Panc1 (cell line): ENCODE measurements at regions of chr13 and their contacts with region 1.

Region 1: GRCh38 chr13:79548902-79549301 is 67.9 kb downstream of the NDFIP2 start:
- DNase-seq: no peak
- ATAC-seq: no peak
- H3K4me3 ChIP-seq: no peak overlapping the region
- H3K27ac ChIP-seq: no peak overlapping the region; the same call in 1 of the 2 replicates
- H3K4me1 ChIP-seq: peaks cover 6% of the 10 kb centered on the region; the same call in 1 of the 2 replicates
- H3K27me3 ChIP-seq: no peaks in the 10 kb centered on the region
- CTCF ChIP-seq: peak; percentile 40; the same call in 1 of the 2 replicates

Region 2: GRCh38 chr13:80840316-80840976 is 1291.5 kb after region 1 on chr13:
- CTCF ChIA-PET with region 1: no interaction called
- POLR2A ChIA-PET with region 1: interaction called, 10 read pairs
- in situ Hi-C with region 1: no loop called
- intact Hi-C with region 1: no loop called
- DNase-seq: no peak
- ATAC-seq: no peak
- H3K4me3 ChIP-seq: no peak overlapping the region
- H3K27ac ChIP-seq: no peak overlapping the region
- H3K4me1 ChIP-seq: no peaks in the 10 kb centered on the region
- H3K27me3 ChIP-seq: no peaks in the 10 kb centered on the region
- CTCF ChIP-seq: no peak